ENCODE measurements at regions of chr12 and their contacts with region 1.

Region 1: DNA sequence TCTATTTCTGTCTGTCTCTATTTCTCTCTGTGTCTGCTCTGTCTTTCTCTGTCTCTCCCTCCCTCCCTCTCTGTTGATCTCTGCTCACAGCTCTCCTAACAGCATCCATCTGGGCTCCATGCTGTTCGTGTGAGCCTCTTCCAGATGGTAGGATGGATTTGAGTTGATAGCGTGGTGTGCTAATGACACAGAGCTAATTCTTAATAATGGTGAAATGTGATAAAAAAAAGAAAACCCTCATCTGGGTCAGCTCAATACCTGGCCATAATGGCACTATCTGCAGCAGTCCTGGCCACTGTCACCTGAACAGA is 96.4 kb downstream of the AACS start:
- DNase-seq: no peak
- ATAC-seq: peak in 1 of 2 experiments; percentile 48; a peak in 3 of 6 replicates
- H3K4me3 ChIP-seq: no peak overlapping the region
- H3K27ac ChIP-seq: no peak overlapping the region
- H3K4me1 ChIP-seq: no peaks in the 10 kb centered on the region
- CTCF ChIP-seq: no peak
- EP300 ChIP-seq: no peak
- POLR2A ChIP-seq: no peak
- RAD21 ChIP-seq: no peak

Region 2: DNA sequence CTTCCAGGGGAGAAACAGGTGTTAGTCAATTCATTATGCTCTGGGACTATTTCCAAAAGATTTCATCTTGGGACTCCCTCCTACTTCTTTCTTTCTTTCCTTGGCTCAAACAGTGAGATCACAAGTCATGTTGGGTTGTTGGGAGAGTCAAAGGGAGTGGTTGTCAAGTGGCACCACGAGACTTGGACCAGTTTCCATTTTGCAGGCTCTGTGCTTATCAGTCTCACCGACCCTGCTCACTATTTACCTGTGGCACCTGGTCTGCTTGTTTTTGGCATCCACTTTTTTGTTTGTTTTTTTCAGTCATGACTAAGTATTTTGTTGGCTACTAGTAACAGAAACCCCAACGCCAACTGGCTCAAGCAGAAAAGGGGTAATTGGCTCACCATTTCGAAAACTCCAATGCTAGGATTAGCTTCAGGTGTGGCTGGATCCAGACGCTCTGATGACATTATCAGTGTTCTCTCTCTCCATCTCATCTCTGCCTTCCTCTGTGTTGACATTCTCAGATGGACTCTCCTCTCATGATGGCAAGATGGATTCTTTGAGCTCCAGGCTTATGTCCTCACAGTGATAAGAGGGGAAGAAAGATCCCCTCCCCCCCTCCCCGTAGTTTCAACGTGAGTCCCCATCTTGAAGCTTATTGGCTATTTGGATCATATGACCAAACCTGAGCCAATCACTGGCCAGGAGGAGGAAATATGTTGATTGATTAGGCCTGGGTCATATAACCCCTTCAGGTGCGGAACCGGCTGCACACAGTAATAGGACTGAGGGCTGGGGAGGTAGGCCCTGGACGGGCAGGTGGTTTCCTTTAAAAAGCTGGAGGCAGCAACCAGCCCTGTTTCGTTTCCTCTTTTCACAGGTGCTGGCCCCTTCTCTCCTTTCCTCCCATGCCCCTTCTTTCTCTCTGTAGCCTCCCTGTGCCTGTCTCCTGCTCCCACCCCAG is 12.2 kb before region 1 on chr12:
- CTCF ChIA-PET with region 1: no interaction called
- POLR2A ChIA-PET with region 1: no interaction called
- DNase-seq: no peak
- ATAC-seq: no peak
- H3K4me3 ChIP-seq: no peak overlapping the region
- H3K27ac ChIP-seq: no peak overlapping the region
- H3K4me1 ChIP-seq: no peaks in the 10 kb centered on the region
- CTCF ChIP-seq: no peak
- EP300 ChIP-seq: no peak
- POLR2A ChIP-seq: no peak
- RAD21 ChIP-seq: no peak

Region 3: GRCh38 chr12:125503128-125503527 is 341.5 kb after region 1 on chr12:
- CTCF ChIA-PET with region 1: no interaction called
- POLR2A ChIA-PET with region 1: interaction called, 10 read pairs
- DNase-seq: no peak
- ATAC-seq: no peak
- H3K4me3 ChIP-seq: no peak overlapping the region
- H3K27ac ChIP-seq: no peak overlapping the region
- H3K4me1 ChIP-seq: no peaks in the 10 kb centered on the region
- CTCF ChIP-seq: no peak
- EP300 ChIP-seq: no peak
- POLR2A ChIP-seq: no peak
- RAD21 ChIP-seq: no peak